H1 (cell line): ENCODE measurements at regions of chr11 and their contacts with region 1.

Region 1: DNA sequence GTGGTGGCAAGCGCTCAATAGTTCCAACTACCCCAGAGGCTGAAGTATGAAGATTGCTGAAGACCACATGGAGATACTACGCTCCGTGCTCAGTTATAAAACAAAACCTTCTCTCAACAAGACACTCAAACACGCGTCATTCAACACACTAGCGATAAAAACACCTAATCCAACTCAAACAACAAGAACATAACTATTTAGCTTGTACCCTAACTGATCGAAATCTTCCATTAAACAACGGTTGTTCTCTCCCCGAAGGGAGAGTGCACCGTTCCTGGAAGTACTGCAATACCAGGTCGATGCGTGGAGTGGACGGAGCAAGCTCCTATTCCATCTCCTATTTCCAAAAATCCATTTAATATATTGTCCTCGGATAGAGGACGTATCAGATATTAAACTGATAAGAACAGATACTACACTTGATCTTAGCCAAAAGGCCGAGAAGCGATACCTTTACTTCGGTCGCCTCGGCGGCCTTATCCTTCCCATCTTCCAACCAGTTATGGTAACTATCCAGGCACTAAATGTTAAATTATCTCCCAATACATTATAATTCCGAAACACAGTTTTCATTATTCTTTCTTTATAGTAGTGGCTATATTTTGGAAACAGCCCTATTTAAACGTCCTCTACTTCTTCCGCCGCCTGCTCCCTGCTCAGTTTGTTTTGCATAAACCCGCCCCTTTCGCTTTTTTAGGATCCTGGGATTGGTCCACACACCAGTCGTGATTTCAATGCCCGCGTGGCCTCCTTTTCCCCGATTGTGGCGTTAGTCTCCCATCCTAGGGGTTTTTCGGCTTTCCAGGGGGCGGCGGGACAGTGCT is 2.2 kb upstream of the WDR74 start:
- DNase-seq: peak; percentile 88
- H3K4me3 ChIP-seq: peak overlapping the region; percentile 40 to 90 (median 55)
- H3K27ac ChIP-seq: peak overlapping the region; percentile 95
- H3K4me1 ChIP-seq: peaks cover 0 to 5% (median 1%) of the 10 kb centered on the region in 4 experiments; a peak in 2 of 7 replicates
- H3K27me3 ChIP-seq: no peaks in the 10 kb centered on the region
- CTCF ChIP-seq: no peak
- EP300 ChIP-seq: 0 out of 3 replicates have a peak, but pooled peaks of 1 of the 2 experiments have one; percentile 63
- POLR2A ChIP-seq: peak; percentile 100
- RAD21 ChIP-seq: no peak

Region 2: DNA sequence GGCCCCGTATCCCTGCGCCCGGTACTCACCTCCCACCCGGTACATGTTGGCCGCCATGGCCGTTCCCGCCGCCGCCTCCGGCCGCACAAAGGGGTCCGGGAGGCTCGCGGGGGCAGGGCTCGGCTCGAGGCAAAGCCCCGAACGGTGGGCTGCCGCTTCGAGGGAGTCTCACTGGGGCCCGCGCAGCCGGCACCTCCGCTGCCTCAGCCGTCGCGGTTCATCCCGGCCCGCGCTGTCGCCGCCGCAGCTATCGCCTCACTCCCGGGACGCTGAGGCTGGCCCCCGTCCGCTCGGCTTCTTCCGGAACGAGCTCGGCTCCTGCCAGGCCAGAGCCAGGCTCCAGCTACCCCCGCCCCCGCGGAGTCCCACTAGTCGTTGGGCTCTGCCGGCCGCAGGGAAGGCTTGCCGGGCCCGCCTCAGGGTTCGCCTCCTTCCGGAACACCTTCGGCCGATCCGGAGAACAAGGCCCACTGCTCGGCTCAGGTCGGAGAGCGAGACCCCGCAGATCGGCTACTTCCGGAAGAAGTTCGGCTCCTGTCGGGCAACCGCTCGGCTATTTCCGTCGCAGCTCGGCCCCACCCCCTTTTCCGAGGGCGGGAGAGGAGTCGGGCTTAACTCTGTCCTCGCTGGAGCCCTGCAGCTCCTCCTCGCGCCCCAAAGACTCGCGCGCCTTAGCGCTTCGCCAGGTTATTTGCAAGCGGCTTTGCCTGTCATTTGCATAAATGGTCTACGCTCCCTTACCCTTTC is 240.0 kb before region 1 on chr11 and contains the start of gene MTA2:
- CTCF ChIA-PET with region 1: no interaction called
- POLR2A ChIA-PET with region 1: interaction called, 23 read pairs
- DNase-seq: peak; percentile 98 to 100
- H3K4me3 ChIP-seq: peak within 1 kb of the TSS; percentile 74 to 86 (median 84)
- H3K27ac ChIP-seq: peak within 1 kb of the TSS; percentile 79
- H3K4me1 ChIP-seq: peaks cover 7 to 32% (median 17%) of the 10 kb centered on the region in 4 experiments
- H3K27me3 ChIP-seq: peaks cover 0 to 13% (median 11%) of the 10 kb centered on the region in 4 experiments; a peak in 6 of 7 replicates
- CTCF ChIP-seq: no peak
- EP300 ChIP-seq: no peak
- POLR2A ChIP-seq: peak in 1 of 2 experiments; percentile 78; a peak in 2 of 3 replicates
- RAD21 ChIP-seq: no peak
- total RNA-seq, gene MTA2: 114 and 117 TPM in 2 replicates

Region 3: GRCh38 chr11:62705880-62706849 is 135.4 kb before region 1 on chr11:
- CTCF ChIA-PET with region 1: no interaction called
- POLR2A ChIA-PET with region 1: interaction called, 44 read pairs
- DNase-seq: peak; percentile 82 to 95
- H3K4me3 ChIP-seq: peak overlapping the region; percentile 64 to 83 (median 82)
- H3K27ac ChIP-seq: peak overlapping the region; percentile 65
- H3K4me1 ChIP-seq: peaks cover 7 to 34% (median 20%) of the 10 kb centered on the region in 4 experiments
- H3K27me3 ChIP-seq: no peaks in the 10 kb centered on the region
- CTCF ChIP-seq: no peak
- EP300 ChIP-seq: no peak
- POLR2A ChIP-seq: peak in 1 of 2 experiments; percentile 62; a peak in 2 of 3 replicates
- RAD21 ChIP-seq: no peak

Region 4: DNA sequence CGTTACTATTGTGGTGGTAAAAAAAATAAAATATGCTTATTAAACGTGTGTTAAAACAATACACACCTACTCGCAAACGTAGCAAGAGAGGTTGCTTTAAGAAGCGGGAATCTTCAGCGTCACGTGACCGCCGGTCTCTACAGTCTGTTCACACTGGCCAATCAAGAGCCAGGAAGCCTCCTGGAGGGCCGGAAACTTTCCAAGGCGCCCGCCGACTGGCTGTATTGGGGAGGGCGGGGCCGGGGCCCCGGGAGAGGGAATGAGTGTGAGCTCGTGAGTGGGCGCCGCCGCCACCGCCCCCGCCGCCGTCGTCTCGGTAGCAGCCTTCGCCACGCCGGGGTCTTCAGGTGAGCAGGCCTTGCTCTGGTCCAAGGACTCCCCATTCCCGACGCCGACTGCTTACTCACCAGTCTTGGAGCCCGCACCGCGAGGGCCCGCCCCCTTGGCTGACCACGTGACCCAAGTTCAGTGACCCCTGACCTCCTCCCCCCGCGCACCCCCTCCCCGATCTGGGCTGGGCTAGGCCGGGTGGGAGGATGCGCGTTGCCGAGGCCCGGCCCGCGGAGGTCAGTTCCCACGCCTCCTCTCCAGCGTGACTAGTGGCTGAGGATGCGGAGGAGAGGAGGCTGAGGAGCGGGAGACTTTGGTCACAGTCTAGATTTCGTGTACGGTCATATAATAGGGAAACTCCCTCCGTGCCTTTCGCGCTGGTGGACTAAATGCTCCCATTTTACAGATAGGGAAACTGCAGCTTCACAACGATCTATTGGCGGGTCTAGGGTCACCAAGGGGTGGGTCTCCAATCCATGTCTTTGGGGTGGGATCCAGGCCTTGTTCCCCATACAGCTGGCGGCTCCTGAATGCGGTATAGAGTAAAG is 70.2 kb before region 1 on chr11 and contains the start of gene TAF6L:
- CTCF ChIA-PET with region 1: interaction called, 4 read pairs
- POLR2A ChIA-PET with region 1: interaction called, 29 read pairs
- DNase-seq: peak; percentile 75 to 98
- H3K4me3 ChIP-seq: peak within 1 kb of the TSS; percentile 77 to 95 (median 92)
- H3K27ac ChIP-seq: peak within 1 kb of the TSS; percentile 72
- H3K4me1 ChIP-seq: peaks cover 0 to 9% (median 5%) of the 10 kb centered on the region in 4 experiments; a peak in 6 of 7 replicates
- H3K27me3 ChIP-seq: no peaks in the 10 kb centered on the region
- CTCF ChIP-seq: no peak
- EP300 ChIP-seq: no peak
- POLR2A ChIP-seq: peak; percentile 78 to 95
- RAD21 ChIP-seq: no peak
- total RNA-seq, gene TAF6L: 29.6 and 31.9 TPM in 2 replicates

Region 5: DNA sequence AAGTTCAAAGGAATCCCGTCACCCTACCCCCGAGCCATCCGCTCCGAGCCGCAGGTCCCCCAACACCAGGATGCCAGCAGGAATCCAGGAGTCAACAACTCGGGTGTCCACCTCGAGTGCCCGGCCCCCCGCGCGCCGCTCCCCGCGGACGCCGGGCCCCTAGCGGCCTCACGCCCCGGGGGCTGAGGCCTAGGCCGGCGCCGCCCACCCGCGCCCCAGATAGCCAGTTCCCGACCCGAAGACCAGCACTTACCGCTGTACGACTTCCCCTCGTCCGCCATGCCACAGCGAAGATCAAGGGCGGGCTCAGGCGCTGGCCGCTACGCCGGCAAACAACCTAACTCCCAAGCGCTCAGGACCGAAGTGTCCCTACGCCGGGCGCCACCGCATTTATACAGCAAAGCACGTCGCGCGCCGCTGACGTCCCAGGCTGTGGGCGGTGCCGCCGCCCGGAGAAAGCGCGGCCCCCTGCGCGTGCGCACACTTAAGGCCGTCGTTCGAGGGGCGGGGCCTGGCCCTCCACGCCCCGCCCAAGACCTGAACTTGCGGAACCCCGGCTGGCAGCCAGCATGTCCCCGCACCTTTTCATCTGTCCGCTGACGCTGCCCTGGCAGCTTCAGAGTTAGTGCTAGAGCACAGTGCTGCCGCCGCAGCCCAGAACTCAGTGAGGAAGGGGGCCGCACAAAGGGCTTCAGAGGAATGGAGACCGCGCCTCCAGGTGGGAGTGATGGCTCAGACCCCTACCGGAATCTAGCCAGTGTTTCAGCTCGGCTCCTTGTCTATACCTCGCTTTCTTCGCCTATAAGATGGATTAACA is 36.3 kb before region 1 on chr11 and contains the start of gene NXF1:
- CTCF ChIA-PET with region 1: no interaction called
- POLR2A ChIA-PET with region 1: interaction called, 90 read pairs
- DNase-seq: peak; percentile 96 to 100
- H3K4me3 ChIP-seq: peak within 1 kb of the TSS; percentile 66 to 85 (median 81)
- H3K27ac ChIP-seq: peak within 1 kb of the TSS; percentile 48; the same call in 1 of the 2 replicates
- H3K4me1 ChIP-seq: peaks cover 0 to 5% (median under 1%) of the 10 kb centered on the region in 4 experiments; a peak in 1 of 7 replicates
- H3K27me3 ChIP-seq: no peaks in the 10 kb centered on the region
- CTCF ChIP-seq: peak in 1 of 3 experiments; percentile 20; a peak in 1 of 4 replicates
- EP300 ChIP-seq: peak in 1 of 2 experiments; percentile 65; a peak in 1 of 3 replicates
- POLR2A ChIP-seq: peak; percentile 100
- RAD21 ChIP-seq: 0 out of 4 replicates have a peak, but pooled peaks of 1 of the 2 experiments have one; percentile 4
- total RNA-seq, gene NXF1: 44.8 and 49.8 TPM in 2 replicates

Region 6: DNA sequence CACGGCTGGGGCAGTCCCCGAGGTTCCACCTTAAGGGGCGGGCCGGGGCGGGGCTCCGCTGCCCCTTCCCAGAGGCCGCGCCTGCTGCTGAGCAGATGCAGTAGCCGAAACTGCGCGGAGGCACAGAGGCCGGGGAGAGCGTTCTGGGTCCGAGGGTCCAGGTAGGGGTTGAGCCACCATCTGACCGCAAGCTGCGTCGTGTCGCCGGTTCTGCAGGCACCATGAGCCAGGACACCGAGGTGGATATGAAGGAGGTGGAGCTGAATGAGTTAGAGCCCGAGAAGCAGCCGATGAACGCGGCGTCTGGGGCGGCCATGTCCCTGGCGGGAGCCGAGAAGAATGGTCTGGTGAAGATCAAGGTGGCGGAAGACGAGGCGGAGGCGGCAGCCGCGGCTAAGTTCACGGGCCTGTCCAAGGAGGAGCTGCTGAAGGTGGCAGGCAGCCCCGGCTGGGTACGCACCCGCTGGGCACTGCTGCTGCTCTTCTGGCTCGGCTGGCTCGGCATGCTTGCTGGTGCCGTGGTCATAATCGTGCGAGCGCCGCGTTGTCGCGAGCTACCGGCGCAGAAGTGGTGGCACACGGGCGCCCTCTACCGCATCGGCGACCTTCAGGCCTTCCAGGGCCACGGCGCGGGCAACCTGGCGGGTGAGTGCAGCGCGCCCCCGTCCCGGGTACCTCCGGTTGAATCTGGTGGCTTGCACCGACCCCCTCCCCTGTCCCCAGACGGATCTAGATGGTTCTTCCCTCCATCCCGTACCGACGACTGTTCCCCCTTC is 39.4 kb after region 1 on chr11 and contains the start of gene SLC3A2:
- CTCF ChIA-PET with region 1: interaction called, 4 read pairs
- POLR2A ChIA-PET with region 1: interaction called, 2,104 read pairs
- DNase-seq: peak; percentile 56 to 88
- H3K4me3 ChIP-seq: peak within 1 kb of the TSS; percentile 67 to 97 (median 88)
- H3K27ac ChIP-seq: peak within 1 kb of the TSS; percentile 98
- H3K4me1 ChIP-seq: peaks cover 0 to 30% (median 12%) of the 10 kb centered on the region in 4 experiments; a peak in 5 of 7 replicates
- H3K27me3 ChIP-seq: no peaks in the 10 kb centered on the region
- CTCF ChIP-seq: peak; percentile 60 to 82 (median 71)
- EP300 ChIP-seq: no peak
- POLR2A ChIP-seq: peak; percentile 97 to 99
- RAD21 ChIP-seq: peak; percentile 39 to 55
- total RNA-seq, gene SLC3A2: 393 and 410 TPM in 2 replicates

Region 7: GRCh38 chr11:62980133-62980760 is 138.7 kb after region 1 on chr11:
- CTCF ChIA-PET with region 1: no interaction called
- POLR2A ChIA-PET with region 1: no interaction called
- DNase-seq: no peak
- H3K4me3 ChIP-seq: no peak overlapping the region
- H3K27ac ChIP-seq: no peak overlapping the region
- H3K4me1 ChIP-seq: peaks cover 0 to 2% (median under 1%) of the 10 kb centered on the region in 4 experiments; a peak in 2 of 7 replicates
- H3K27me3 ChIP-seq: no peaks in the 10 kb centered on the region; a peak in 2 of 7 replicates
- CTCF ChIP-seq: no peak
- EP300 ChIP-seq: no peak
- POLR2A ChIP-seq: no peak
- RAD21 ChIP-seq: no peak